CD4-positive, alpha-beta memory T cell (primary cell): ENCODE measurements at regions of chr6 and their contacts with region 1.

Region 1: DNA sequence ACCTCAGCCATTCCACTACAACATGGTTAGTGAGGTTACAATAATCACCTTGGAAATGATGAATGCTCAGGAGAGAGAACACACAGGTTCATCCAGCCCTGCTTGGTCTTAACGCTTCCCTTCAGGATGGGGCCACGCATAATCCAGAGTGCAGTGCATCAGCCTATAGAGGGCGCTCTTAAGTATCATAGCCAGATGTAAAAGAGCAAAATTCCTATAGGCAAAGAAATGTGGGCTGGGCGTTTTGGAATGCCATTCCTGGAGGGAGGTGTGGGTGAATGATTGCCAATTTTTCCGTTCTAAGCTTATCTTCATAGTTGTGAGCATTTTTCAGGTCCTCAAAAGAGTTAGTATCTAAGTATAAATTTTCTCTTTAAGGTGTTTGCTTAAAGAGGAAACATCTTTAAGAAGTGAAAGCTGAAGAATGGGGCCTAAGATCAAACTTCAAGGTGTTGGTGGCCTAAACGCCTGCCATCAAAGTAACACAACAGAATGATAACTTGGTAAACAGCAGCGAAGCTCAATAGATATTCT is 1.8 kb downstream of the RIPOR2 start:
- DNase-seq: peak; percentile 63 to 74 (median 68)
- H3K4me3 ChIP-seq: peak overlapping the region; percentile 96 to 100
- H3K4me3 Mint-ChIP-seq: peak overlapping the region; percentile 96 to 100 (median 99)
- H3K27ac ChIP-seq: peak overlapping the region; percentile 78
- H3K27ac Mint-ChIP-seq: peak overlapping the region; percentile 87 to 96 (median 94)
- H3K4me1 ChIP-seq: peaks cover 55% of the 10 kb centered on the region
- H3K4me1 Mint-ChIP-seq: peaks cover 39 to 68% (median 51%) of the 10 kb centered on the region in 4 donors
- H3K27me3 ChIP-seq: no peaks in the 10 kb centered on the region
- H3K27me3 Mint-ChIP-seq: no peaks in the 10 kb centered on the region

Region 2: DNA sequence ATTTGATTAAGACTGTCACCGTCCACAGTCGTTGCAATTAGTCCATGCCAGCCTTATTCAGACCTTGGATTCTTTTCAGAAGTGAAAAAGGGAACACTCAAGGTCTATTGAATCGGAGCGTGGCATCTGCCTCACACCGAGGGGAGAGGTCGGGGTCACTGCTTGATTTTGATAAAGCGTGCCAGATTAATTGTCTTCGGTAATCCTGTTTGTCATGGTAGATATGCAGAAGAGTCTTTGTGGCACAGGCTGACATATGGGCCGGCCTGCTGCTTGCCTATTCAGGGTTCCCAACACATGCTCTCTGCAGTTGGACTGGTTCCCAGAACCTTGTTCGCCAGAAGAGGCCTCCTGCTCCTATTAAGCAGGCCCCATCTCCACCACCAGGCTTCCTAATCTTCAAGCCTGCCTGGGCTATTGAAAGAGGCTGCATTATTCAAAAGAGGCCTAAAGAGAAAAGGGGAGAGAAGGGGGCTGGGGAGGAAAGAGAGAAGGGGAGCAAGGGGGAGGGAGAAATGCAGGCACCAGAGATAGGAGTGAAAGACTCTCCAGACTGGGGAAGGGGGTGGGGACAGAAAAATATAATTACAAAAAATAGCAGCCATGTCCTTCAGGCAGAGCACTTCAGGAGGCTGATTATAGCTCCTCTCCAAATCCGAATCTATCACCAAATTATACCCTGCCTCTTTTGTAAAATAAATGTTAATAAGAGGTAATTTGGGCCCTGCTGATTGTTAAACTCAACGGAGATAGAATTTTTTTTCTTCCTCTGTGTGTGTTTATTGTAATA is 1753.2 kb before region 1 on chr6:
- CTCF ChIA-PET with region 1: no interaction called
- POLR2A ChIA-PET with region 1: no interaction called
- intact Hi-C with region 1: no loop called
- DNase-seq: no peak
- H3K4me3 ChIP-seq: no peak overlapping the region
- H3K4me3 Mint-ChIP-seq: no peak overlapping the region
- H3K27ac ChIP-seq: no peak overlapping the region
- H3K27ac Mint-ChIP-seq: no peak overlapping the region
- H3K4me1 ChIP-seq: no peaks in the 10 kb centered on the region
- H3K4me1 Mint-ChIP-seq: no peaks in the 10 kb centered on the region
- H3K27me3 ChIP-seq: no peaks in the 10 kb centered on the region
- H3K27me3 Mint-ChIP-seq: no peaks in the 10 kb centered on the region

Region 3: GRCh38 chr6:24855395-24856245 is 78.3 kb before region 1 on chr6:
- CTCF ChIA-PET with region 1: interaction called, 44 read pairs
- POLR2A ChIA-PET with region 1: interaction called, 76 read pairs
- intact Hi-C with region 1: loop called (anchors 1 kb)
- DNase-seq: peak; percentile 76 to 82 (median 77)
- H3K4me3 ChIP-seq: no peak overlapping the region
- H3K4me3 Mint-ChIP-seq: peak overlapping the region in 5 of 8 donors; percentile 1 to 87 (median 26)
- H3K27ac ChIP-seq: peak overlapping the region; percentile 61
- H3K27ac Mint-ChIP-seq: peak overlapping the region; percentile 82 to 92 (median 90)
- H3K4me1 ChIP-seq: peaks cover 53% of the 10 kb centered on the region
- H3K4me1 Mint-ChIP-seq: peaks cover 48 to 58% (median 50%) of the 10 kb centered on the region in 4 donors
- H3K27me3 ChIP-seq: no peaks in the 10 kb centered on the region
- H3K27me3 Mint-ChIP-seq: no peaks in the 10 kb centered on the region

Region 4: DNA sequence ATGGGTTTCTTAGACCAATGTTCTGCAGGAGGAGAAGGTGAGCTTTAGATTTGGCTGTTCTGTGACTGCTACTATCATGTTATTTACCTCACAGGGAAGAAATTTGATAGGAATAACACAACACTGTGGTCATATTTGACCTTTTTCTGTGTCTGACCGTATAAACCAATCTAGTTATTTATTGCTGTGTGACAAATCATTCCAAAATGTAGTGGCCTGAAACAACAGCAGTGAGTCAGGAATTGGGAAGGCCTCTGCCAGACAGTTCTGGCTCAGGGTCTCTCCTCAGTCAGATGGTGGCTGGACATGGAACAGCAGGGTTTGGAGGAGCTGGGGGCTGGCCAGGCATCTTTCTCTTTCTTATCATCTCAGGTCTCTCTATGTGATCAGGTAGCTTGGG is 31.2 kb before region 1 on chr6:
- CTCF ChIA-PET with region 1: interaction called, 245 read pairs
- POLR2A ChIA-PET with region 1: interaction called, 734 read pairs
- intact Hi-C with region 1: no loop called
- DNase-seq: no peak
- H3K4me3 ChIP-seq: no peak overlapping the region
- H3K4me3 Mint-ChIP-seq: peak overlapping the region in 6 of 8 donors; percentile 16 to 85 (median 63)
- H3K27ac ChIP-seq: no peak overlapping the region
- H3K27ac Mint-ChIP-seq: peak overlapping the region; percentile 73 to 94 (median 89)
- H3K4me1 ChIP-seq: peaks cover 99% of the 10 kb centered on the region
- H3K4me1 Mint-ChIP-seq: peaks cover 81 to 99% (median 92%) of the 10 kb centered on the region in 4 donors
- H3K27me3 ChIP-seq: no peaks in the 10 kb centered on the region
- H3K27me3 Mint-ChIP-seq: no peaks in the 10 kb centered on the region

Region 5: DNA sequence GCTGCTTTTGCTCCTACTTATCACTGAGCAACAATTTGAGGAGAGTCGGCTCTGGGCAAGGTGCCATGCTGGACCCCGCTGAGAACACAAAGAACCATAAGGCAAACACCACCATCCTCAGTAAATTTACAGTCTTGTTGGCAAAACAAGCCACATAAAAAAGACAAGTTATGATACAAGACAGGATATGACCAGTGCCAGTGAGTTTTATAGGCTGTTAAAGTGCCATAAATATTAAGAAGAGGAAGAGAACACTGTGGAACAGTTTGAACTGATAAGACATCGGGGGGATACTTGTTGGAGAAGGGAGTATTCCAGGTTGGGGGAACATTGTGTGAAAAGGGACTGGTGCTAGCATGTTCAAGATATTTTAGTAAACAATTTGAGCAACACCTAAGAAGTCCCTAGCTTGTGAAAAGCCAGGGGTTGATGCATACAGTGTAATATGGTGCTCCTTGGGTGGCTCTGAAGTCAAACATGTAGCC is 27.1 kb after region 1 on chr6:
- CTCF ChIA-PET with region 1: interaction called, 333 read pairs
- POLR2A ChIA-PET with region 1: interaction called, 1,351 read pairs
- intact Hi-C with region 1: no loop called
- DNase-seq: peak in 4 of 5 donors; percentile 40 to 58 (median 47)
- H3K4me3 ChIP-seq: no peak overlapping the region
- H3K4me3 Mint-ChIP-seq: peak overlapping the region; percentile 4 to 79 (median 64)
- H3K27ac ChIP-seq: peak overlapping the region; percentile 12
- H3K27ac Mint-ChIP-seq: peak overlapping the region; percentile 74 to 97 (median 91)
- H3K4me1 ChIP-seq: peaks cover 96% of the 10 kb centered on the region
- H3K4me1 Mint-ChIP-seq: peaks cover 68 to 90% (median 78%) of the 10 kb centered on the region in 4 donors
- H3K27me3 ChIP-seq: no peaks in the 10 kb centered on the region
- H3K27me3 Mint-ChIP-seq: no peaks in the 10 kb centered on the region

Region 6: DNA sequence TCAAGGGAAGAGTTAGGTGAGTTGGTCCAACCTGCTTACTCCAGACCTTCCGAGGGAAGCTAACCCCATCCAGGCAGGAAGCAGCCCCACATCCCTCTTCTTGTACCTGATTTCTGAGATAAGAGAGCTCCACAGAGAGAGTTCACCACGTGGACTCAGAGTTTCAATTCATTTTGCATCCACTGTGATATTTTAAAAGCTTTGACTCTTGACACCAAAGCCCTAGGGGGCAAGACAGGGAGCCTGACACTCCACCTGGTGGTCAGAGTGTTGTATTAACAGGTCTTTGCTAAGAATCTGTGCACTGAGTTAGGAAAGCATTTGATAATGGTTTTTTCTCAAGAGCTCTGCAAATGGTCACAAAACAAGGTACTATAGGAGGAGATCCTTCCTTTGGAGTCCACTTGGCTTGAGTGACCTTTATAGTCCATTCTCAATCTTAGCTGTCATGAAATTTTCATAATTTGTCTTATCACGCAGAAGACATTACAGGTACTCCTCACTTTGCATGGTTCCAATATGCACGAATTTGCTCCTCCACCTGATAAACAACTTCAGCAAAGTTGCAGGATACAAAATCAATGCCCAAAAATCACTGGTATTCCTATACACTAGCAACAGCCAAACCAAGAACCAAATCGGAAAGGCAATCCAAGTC is 58.0 kb after region 1 on chr6:
- CTCF ChIA-PET with region 1: interaction called, 367 read pairs
- POLR2A ChIA-PET with region 1: interaction called, 486 read pairs
- intact Hi-C with region 1: loop called (anchors 1 kb)
- DNase-seq: peak; percentile 80 to 84 (median 80)
- H3K4me3 ChIP-seq: peak overlapping the region in 1 of 2 donors; percentile 31
- H3K4me3 Mint-ChIP-seq: peak overlapping the region in 7 of 8 donors; percentile 29 to 83 (median 72)
- H3K27ac ChIP-seq: peak overlapping the region; percentile 29
- H3K27ac Mint-ChIP-seq: peak overlapping the region; percentile 75 to 94 (median 83)
- H3K4me1 ChIP-seq: peaks cover 66% of the 10 kb centered on the region
- H3K4me1 Mint-ChIP-seq: peaks cover 61 to 84% (median 75%) of the 10 kb centered on the region in 4 donors
- H3K27me3 ChIP-seq: no peaks in the 10 kb centered on the region
- H3K27me3 Mint-ChIP-seq: no peaks in the 10 kb centered on the region

Region 7: GRCh38 chr6:25035527-25036435 is 101.8 kb after region 1 on chr6:
- CTCF ChIA-PET with region 1: interaction called, 16 read pairs
- POLR2A ChIA-PET with region 1: interaction called, 57 read pairs
- intact Hi-C with region 1: no loop called
- DNase-seq: peak; percentile 34 to 51 (median 37)
- H3K4me3 ChIP-seq: peak overlapping the region; percentile 44 to 68
- H3K4me3 Mint-ChIP-seq: peak overlapping the region; percentile 84 to 93 (median 90)
- H3K27ac ChIP-seq: peak overlapping the region; percentile 69
- H3K27ac Mint-ChIP-seq: peak overlapping the region; percentile 92 to 100 (median 96)
- H3K4me1 ChIP-seq: peaks cover 88% of the 10 kb centered on the region
- H3K4me1 Mint-ChIP-seq: peaks cover 61 to 88% (median 72%) of the 10 kb centered on the region in 4 donors
- H3K27me3 ChIP-seq: no peaks in the 10 kb centered on the region
- H3K27me3 Mint-ChIP-seq: no peaks in the 10 kb centered on the region

Region 8: DNA sequence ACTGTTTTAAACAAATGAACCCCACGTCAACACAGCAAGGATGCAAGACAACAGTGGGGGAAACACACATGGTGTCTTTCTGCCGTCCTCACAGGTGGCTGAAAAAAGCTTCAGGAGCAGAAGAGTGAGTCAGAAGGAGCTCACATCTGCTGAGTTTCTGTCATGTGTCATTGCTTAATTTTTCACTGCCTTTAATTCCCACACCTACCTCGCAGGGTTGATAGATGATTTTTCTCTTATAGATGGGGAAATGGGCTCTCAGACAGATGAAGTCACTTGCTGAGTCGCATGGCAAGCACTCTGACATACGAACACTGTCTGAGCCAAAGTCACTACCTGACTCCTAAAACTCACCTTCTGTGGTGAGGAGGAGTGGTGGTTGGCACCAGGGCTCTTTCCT is 316.9 kb after region 1 on chr6:
- CTCF ChIA-PET with region 1: no interaction called
- POLR2A ChIA-PET with region 1: no interaction called
- intact Hi-C with region 1: no loop called
- DNase-seq: no peak
- H3K4me3 ChIP-seq: no peak overlapping the region
- H3K4me3 Mint-ChIP-seq: no peak overlapping the region
- H3K27ac ChIP-seq: no peak overlapping the region
- H3K27ac Mint-ChIP-seq: no peak overlapping the region
- H3K4me1 ChIP-seq: no peaks in the 10 kb centered on the region
- H3K4me1 Mint-ChIP-seq: no peaks in the 10 kb centered on the region
- H3K27me3 ChIP-seq: no peaks in the 10 kb centered on the region
- H3K27me3 Mint-ChIP-seq: peaks cover 14% of the 10 kb centered on the region in 2 donors